ENCODE measurements at regions of chr11 and their contacts with region 1.

Region 1: GRCh38 chr11:119018074-119018938 is at the starts of genes RPS25 and TRAPPC4:
- DNase-seq: peak; percentile 91 to 98
- ATAC-seq: peak; percentile 86 to 95 (median 86)
- H3K4me3 ChIP-seq: peak within 1 kb of the TSS; percentile 93
- H3K4me3 Mint-ChIP-seq: peak within 1 kb of the TSS; percentile 99
- H3K27ac ChIP-seq: peak within 1 kb of the TSS; percentile 94
- H3K27ac Mint-ChIP-seq: peak within 1 kb of the TSS; percentile 99
- H3K4me1 ChIP-seq: peaks cover 33% of the 10 kb centered on the region
- H3K4me1 Mint-ChIP-seq: peaks cover 18 to 27% of the 10 kb centered on the region in 2 donors
- H3K27me3 ChIP-seq: no peaks in the 10 kb centered on the region
- H3K27me3 Mint-ChIP-seq: no peaks in the 10 kb centered on the region
- CTCF ChIP-seq: no peak
- total RNA-seq, gene RPS25: 870 to 1,051 (median 887) TPM
- total RNA-seq, gene TRAPPC4: 71.4 to 84.5 (median 77.5) TPM

Region 2: GRCh38 chr11:118997627-118998387 is 20.5 kb before region 1 on chr11 and contains the start of gene CENATAC:
- intact Hi-C with region 1: loop called (anchors 1 kb)
- DNase-seq: peak; percentile 91 to 97
- ATAC-seq: peak; percentile 92 to 98 (median 95)
- H3K4me3 ChIP-seq: peak within 1 kb of the TSS; percentile 88
- H3K4me3 Mint-ChIP-seq: peak within 1 kb of the TSS; percentile 97
- H3K27ac ChIP-seq: peak within 1 kb of the TSS; percentile 93
- H3K27ac Mint-ChIP-seq: peak within 1 kb of the TSS; percentile 94
- H3K4me1 ChIP-seq: peaks cover 23% of the 10 kb centered on the region
- H3K4me1 Mint-ChIP-seq: peaks cover 30 to 33% of the 10 kb centered on the region in 2 donors
- H3K27me3 ChIP-seq: no peaks in the 10 kb centered on the region
- H3K27me3 Mint-ChIP-seq: no peaks in the 10 kb centered on the region
- CTCF ChIP-seq: no peak
- total RNA-seq, gene CENATAC: 121 to 143 (median 122) TPM

Region 3: DNA sequence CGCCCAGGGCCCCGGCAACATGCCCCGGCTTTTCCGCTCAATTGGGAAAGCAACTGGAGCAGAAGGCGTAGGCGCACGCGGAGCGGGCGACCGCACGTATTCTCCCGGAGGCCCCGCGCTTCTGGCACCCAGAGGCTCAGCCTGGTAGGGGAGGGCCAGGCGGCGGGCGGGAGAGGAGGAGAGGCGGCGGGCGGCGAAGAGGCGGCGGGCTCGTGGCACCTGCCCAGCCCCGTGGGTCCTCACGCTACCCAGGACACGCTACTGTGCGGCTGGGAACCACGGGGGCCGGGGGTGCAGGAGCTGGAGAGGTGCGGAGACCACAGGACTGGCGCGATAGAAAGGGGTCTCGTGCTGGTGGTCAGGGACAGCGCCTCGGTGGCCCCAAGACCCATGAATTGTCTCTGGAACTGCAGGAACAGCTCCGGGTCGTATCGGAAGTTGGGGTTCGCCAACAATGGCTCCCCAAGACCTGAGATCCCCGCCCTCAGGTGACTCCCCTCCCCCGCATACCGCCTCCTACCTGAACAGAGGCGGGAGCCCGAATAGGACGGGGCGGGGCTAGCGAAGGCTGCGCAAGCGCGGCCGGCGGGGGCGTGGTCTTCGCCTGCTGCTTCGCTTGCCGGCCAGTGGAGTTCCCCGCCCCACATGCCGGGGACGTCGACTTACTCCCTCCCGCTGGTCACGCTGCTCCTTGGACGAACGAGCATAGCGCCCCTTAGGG is 12.2 kb after region 1 on chr11 and contains the start of gene SLC37A4:
- intact Hi-C with region 1: loop called (anchors 1 kb)
- DNase-seq: peak; percentile 98 to 99
- ATAC-seq: peak; percentile 96 to 98 (median 97)
- H3K4me3 ChIP-seq: peak within 1 kb of the TSS; percentile 74
- H3K4me3 Mint-ChIP-seq: peak within 1 kb of the TSS; percentile 84
- H3K27ac ChIP-seq: peak within 1 kb of the TSS; percentile 55
- H3K27ac Mint-ChIP-seq: peak within 1 kb of the TSS; percentile 14 to 85
- H3K4me1 ChIP-seq: peaks cover 13% of the 10 kb centered on the region
- H3K4me1 Mint-ChIP-seq: peaks cover under 1 to 16% of the 10 kb centered on the region in 2 donors
- H3K27me3 ChIP-seq: no peaks in the 10 kb centered on the region
- H3K27me3 Mint-ChIP-seq: no peaks in the 10 kb centered on the region
- CTCF ChIP-seq: peak; percentile 82
- total RNA-seq, gene SLC37A4: 4.6 to 7.7 (median 6.5) TPM

Region 4: GRCh38 chr11:119067371-119068222 is 49.3 kb after region 1 on chr11 and contains the start of gene VPS11:
- intact Hi-C with region 1: loop called (anchors 2 kb)
- DNase-seq: peak; percentile 95 to 99
- ATAC-seq: peak; percentile 92 to 99 (median 93)
- H3K4me3 ChIP-seq: peak within 1 kb of the TSS; percentile 91
- H3K4me3 Mint-ChIP-seq: peak within 1 kb of the TSS; percentile 95
- H3K27ac ChIP-seq: peak within 1 kb of the TSS; percentile 89
- H3K27ac Mint-ChIP-seq: peak within 1 kb of the TSS; percentile 98 to 99
- H3K4me1 ChIP-seq: peaks cover 19% of the 10 kb centered on the region
- H3K4me1 Mint-ChIP-seq: peaks cover 32 to 33% of the 10 kb centered on the region in 2 donors
- H3K27me3 ChIP-seq: no peaks in the 10 kb centered on the region
- H3K27me3 Mint-ChIP-seq: no peaks in the 10 kb centered on the region
- CTCF ChIP-seq: no peak
- total RNA-seq, gene VPS11: 91.4 to 101 (median 91.7) TPM

Region 5: DNA sequence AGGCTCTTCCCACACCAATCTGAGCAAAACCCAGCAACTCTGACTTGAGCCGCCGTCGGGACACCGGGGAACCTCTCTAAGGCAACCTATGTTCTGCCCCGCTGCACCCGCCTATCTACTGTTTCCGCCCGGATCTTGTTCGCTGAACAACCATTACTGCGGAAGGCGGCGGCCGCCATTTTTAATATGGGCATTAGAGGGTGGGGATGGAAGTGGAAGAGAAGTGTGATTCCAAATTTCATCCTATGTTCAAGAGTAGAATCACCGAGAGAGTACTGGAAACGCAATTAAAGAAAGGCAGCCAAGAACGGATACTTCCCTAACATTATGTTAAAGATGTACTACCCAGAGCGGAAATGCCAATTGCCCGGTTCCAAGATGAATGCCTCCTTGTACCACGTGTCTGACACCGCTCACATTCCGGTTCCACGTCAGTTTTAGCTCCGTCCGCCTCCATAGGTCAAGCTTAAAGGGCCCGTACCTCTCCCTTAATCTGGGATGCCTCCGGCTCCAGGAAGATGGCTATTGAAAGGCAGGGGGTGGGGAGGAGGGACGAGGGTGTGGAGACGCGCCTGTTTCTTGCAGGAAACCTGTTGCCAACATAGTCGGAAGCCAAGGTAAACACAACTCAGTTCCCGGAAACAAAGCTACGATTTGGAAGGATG is 83.6 kb after region 1 on chr11 and contains the start of gene DPAGT1:
- intact Hi-C with region 1: loop called (anchors 5 kb)
- DNase-seq: peak; percentile 78 to 92
- ATAC-seq: peak; percentile 88 to 94 (median 90)
- H3K4me3 ChIP-seq: peak within 1 kb of the TSS; percentile 69
- H3K4me3 Mint-ChIP-seq: peak within 1 kb of the TSS; percentile 96
- H3K27ac ChIP-seq: peak within 1 kb of the TSS; percentile 77
- H3K27ac Mint-ChIP-seq: peak within 1 kb of the TSS; percentile 94 to 98
- H3K4me1 ChIP-seq: peaks cover 34% of the 10 kb centered on the region
- H3K4me1 Mint-ChIP-seq: peaks cover 29 to 38% of the 10 kb centered on the region in 2 donors
- H3K27me3 ChIP-seq: no peaks in the 10 kb centered on the region
- H3K27me3 Mint-ChIP-seq: no peaks in the 10 kb centered on the region
- CTCF ChIP-seq: no peak
- total RNA-seq, gene DPAGT1: 20.5 to 28.5 (median 24.4) TPM

Region 6: DNA sequence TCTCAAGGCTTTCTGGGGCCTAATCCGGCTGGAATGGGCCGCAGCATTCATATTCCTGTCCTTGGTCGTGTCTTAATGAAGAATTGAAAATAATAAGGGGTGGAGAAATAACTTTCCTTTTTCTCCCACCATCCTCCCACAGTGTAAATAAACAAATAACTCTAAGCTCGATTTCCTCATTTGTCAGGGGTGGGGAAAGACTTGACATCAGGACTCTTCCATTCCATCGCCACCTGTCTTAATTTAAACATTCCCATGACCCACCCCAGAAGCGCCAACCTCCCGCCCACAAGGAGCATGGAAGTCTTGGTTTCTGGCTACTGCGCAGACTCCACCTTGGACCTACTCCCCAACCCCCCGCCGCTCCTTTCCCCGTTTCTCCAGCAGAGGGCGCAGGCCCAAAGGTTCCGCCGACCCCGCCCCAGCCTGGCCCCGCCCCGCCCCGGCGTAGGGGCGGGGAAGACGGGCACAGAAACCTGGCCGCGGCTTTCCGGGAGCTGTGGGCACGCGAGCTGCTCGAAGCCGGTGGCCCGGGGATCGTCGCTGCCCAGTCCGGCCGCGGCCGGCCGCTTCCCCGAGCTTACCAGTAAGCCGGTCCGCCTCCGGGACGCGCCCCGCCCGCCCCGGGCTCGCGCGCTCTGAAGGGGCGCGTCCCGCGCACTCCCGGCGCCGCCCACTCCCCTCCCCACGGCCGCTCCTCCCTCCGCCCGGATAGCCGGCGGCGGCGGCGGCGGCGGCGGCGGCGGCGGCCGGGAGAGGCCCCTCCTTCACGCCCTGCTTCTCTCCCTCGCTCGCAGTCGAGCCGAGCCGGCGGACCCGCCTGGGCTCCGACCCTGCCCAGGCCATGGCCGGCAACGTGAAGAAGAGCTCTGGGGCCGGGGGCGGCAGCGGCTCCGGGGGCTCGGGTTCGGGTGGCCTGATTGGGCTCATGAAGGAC is 187.5 kb after region 1 on chr11 and contains the start of gene CBL:
- intact Hi-C with region 1: loop called (anchors 5 kb)
- DNase-seq: peak; percentile 94 to 97
- ATAC-seq: peak; percentile 91 to 98 (median 92)
- H3K4me3 ChIP-seq: peak within 1 kb of the TSS; percentile 100
- H3K4me3 Mint-ChIP-seq: peak within 1 kb of the TSS; percentile 95
- H3K27ac ChIP-seq: peak within 1 kb of the TSS; percentile 79
- H3K27ac Mint-ChIP-seq: peak within 1 kb of the TSS; percentile 81 to 87
- H3K4me1 ChIP-seq: peaks cover 12% of the 10 kb centered on the region
- H3K4me1 Mint-ChIP-seq: peaks cover 13 to 21% of the 10 kb centered on the region in 2 donors
- H3K27me3 ChIP-seq: no peaks in the 10 kb centered on the region
- H3K27me3 Mint-ChIP-seq: no peaks in the 10 kb centered on the region
- CTCF ChIP-seq: peak; percentile 78
- total RNA-seq, gene CBL: 29.0 to 32.5 (median 30.1) TPM

Region 7: GRCh38 chr11:119262668-119263351 is 244.5 kb after region 1 on chr11:
- intact Hi-C with region 1: no loop called
- DNase-seq: peak in 1 of 2 donors; percentile 54
- ATAC-seq: peak; percentile 39 to 59 (median 50)
- H3K4me3 ChIP-seq: no peak overlapping the region
- H3K4me3 Mint-ChIP-seq: no peak overlapping the region
- H3K27ac ChIP-seq: peak overlapping the region; percentile 36
- H3K27ac Mint-ChIP-seq: no peak overlapping the region
- H3K4me1 ChIP-seq: peaks cover 20% of the 10 kb centered on the region
- H3K4me1 Mint-ChIP-seq: peaks cover 31 to 41% of the 10 kb centered on the region in 2 donors
- H3K27me3 ChIP-seq: no peaks in the 10 kb centered on the region
- H3K27me3 Mint-ChIP-seq: no peaks in the 10 kb centered on the region
- CTCF ChIP-seq: no peak

Measured in natural killer cell (primary cell).